Mammary epithelial cell (primary cell): ENCODE measurements at regions of chr4 and their contacts with region 1.

Region 1: GRCh38 chr4:41072021-41072777 is 142.1 kb downstream of the APBB2 start:
- DNase-seq: no peak
- H3K4me3 ChIP-seq: no peak overlapping the region
- H3K27ac ChIP-seq: no peak overlapping the region
- H3K4me1 ChIP-seq: peaks cover 4% of the 10 kb centered on the region
- H3K27me3 ChIP-seq: no peaks in the 10 kb centered on the region
- CTCF ChIP-seq: no peak

Region 2: DNA sequence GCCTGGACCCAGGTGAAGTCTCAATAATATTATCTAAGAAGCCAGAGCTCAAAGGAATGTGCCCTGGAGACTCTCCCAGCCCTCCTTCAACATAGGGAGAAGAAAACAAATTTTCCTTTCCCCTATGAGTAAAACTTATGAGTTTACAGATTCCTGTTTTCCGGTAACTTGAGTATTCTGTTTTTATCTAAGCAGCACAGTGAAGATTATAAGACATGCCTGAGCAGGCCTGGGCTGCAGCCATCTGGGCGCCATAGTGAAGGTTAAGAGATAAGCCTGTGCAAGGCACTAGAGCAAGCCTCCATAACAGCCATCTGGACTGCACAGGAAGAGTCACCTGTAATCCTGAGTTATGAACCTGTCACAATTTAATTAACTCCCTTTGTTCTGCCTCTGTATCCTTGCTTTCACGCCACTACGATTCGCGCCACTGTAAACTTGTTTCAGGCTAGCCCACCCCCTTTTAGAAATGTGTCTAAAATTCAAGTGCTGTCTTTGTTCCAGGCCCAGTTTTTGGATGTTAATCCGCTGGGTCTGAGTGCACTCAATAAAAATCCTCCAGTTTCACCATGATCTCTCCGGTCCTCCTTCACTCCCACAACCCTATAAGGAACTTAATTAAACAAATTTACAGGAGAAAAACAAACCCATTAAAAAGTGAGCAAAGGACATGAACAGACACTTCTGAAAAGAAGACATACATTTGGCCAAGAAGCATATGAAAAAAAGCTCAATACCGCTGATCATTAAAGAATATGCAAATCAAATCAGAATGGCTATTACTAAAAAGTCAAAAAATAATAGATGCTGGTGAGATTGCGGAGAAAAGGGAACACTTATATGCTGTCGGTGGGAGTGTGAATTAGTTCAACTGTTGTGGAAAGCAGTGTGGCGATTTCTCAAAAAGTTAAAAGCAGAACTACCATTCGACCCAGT is 47.4 kb before region 1 on chr4:
- CTCF ChIA-PET with region 1: no interaction called
- dilution Hi-C with region 1: no loop called
- in situ Hi-C with region 1: no loop called
- intact Hi-C with region 1: loop called (anchors 10 kb)
- DNase-seq: peak; percentile 57
- H3K4me3 ChIP-seq: no peak overlapping the region
- H3K27ac ChIP-seq: no peak overlapping the region
- H3K4me1 ChIP-seq: peaks cover 8% of the 10 kb centered on the region
- H3K27me3 ChIP-seq: no peaks in the 10 kb centered on the region
- CTCF ChIP-seq: no peak

Region 3: DNA sequence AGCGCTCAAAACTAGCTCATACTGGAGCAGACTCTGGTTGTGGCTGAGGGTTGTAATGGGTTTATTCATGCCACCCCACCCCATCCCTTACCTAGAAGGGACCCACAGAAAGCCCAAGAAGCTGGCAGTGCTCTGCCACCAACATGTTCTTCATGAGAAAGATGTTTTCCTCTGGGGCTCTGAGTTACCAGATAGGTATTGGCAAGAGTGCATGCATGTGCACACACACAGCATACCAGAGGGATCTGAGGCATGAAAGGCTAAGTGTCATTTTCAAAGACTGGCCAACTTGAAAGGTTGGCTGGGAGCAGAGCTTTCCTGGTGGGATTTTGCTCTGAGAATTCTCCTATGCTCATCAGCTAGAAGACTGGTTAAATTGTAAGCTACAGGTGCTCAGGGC is 611.1 kb after region 1 on chr4:
- CTCF ChIA-PET with region 1: no interaction called
- dilution Hi-C with region 1: no loop called
- in situ Hi-C with region 1: no loop called
- intact Hi-C with region 1: no loop called
- DNase-seq: no peak
- H3K4me3 ChIP-seq: no peak overlapping the region
- H3K27ac ChIP-seq: no peak overlapping the region
- H3K4me1 ChIP-seq: no peaks in the 10 kb centered on the region
- H3K27me3 ChIP-seq: peaks cover 3% of the 10 kb centered on the region
- CTCF ChIP-seq: no peak